Left colon (tissue), 2 donors: ENCODE measurements at regions of chr1 and their contacts with region 1.

Region 1: DNA sequence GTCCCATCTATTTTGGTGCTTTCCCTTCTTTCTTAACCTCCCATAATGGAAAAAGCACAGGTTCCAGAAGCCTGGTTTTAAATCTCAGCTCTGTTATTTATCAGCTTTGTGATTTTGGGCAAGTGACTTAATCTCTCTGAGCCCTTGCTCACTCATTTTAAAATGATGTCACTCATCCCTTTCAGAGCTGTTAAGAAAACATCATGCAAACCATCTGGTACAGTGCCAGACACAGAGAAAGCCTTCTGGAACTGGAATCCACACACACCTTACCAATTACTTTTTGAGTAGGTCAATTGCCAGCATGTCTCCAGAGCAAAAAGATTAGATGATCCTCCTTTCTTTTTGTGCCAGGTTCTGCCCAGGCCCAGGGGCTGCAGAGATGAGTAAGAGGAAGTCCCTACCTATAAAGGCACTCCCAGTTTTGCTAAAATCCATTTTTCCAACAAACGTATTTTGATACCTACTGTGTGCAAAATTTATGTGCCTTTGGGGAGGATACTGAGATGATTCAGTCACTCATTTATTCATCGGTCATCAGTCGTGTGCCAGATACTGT is 61.3 kb downstream of the ROR1 start:
- DNase-seq: no peak
- ATAC-seq: no peak

Region 2: DNA sequence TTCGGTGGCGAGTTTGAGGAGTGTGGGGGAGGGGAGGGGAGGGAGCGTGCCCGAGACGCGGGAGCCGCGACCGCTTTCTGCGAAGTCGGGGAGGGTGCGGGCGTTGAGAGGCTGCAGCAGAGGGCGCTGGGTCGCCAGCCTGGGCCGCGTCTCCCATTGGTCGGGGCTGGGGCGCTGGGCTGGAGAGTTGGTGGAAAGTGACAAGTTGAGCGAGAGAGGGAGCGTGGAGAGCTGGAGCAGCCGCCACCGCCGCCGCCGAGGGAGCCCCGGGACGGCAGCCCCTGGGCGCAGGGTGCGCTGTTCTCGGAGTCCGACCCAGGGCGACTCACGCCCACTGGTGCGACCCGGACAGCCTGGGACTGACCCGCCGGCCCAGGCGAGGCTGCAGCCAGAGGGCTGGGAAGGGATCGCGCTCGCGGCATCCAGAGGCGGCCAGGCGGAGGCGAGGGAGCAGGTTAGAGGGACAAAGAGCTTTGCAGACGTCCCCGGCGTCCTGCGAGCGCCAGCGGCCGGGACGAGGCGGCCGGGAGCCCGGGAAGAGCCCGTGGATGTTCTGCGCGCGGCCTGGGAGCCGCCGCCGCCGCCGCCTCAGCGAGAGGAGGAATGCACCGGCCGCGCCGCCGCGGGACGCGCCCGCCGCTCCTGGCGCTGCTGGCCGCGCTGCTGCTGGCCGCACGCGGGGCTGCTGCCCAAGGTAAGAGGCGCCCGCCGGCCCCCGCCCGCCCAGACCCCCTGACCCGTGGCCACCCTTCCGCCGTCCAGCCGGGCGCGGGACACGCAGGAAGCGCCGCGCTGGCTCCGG is 61.1 kb before region 1 on chr1 and contains the start of gene ROR1:
- intact Hi-C with region 1: loop called in 1 of 2 experiments (anchors 2 kb)
- DNase-seq: peak; percentile 87
- ATAC-seq: peak; percentile 96
- total RNA-seq, gene ROR1: 5.1 to 7.1 TPM

Region 3: GRCh38 chr1:63955370-63956145 is 120.4 kb after region 1 on chr1:
- intact Hi-C with region 1: no loop called
- DNase-seq: no peak
- ATAC-seq: no peak

Region 4: GRCh38 chr1:63980740-63981407 is 145.7 kb after region 1 on chr1:
- intact Hi-C with region 1: no loop called
- DNase-seq: no peak
- ATAC-seq: no peak